ENCODE measurements at regions of chr3 and their contacts with region 1.

Region 1: GRCh38 chr3:110210086-110210660 is 861.4 kb upstream of the NECTIN3 start:
- DNase-seq: no peak
- ATAC-seq: no peak

Region 2: GRCh38 chr3:110767838-110768237 is 557.7 kb after region 1 on chr3:
- intact Hi-C with region 1: loop called (anchors 5 kb)
- DNase-seq: no peak
- ATAC-seq: no peak

Measured in sciatic nerve (tissue), 2 donors.